Transverse colon (tissue), 4 donors: ENCODE measurements at regions of chr15 and their contacts with region 1.

Region 1: DNA sequence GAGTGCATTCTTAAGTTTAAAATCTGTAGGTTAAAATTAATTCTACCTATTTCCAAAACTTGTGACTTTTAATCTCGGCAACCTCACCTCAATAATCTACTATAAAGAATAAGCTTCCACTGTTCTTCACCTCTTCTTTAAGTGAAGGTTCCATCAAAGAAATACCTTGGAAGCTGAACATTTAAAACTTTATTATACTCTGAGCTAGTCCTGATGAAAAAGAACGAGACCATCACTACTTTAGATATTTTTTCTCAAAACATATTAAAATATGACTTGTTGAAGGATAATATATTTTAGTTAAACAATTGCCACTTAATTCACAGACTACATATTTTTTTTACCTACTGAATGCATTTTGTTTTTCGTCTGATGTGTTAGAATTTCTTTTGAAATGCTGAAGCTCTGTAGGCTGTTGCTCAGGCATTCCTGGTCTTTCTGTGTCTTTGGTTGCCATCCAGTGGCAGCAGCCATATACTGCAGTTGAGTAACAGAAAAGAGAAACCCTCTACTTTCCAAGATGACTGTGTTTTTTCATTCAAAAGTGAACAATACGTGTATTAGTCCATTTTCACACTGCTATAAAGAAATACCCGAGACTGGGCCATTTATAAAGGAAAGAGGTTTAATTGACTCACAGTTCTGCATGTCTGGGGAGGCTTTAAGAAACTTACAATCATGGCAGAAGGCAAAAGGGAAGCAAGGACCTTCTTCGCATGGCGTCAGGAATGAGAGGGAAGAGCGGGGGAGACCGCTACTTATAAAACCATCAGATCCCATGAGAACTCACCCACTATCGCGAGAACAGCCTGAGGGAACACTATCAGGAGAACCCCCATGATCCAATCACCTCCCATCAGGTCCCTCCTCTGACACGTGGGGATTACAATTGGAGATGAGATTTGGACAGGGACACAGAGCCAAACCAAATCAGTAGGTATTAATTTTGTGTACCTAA is 4.5 kb upstream of the GOLGA8B start:
- DNase-seq: peak; percentile 64
- H3K4me3 ChIP-seq: peak overlapping the region in 1 of 4 donors; percentile 12
- H3K27ac ChIP-seq: peak overlapping the region in 1 of 4 donors; percentile 57
- H3K4me1 ChIP-seq: peaks cover 0 to 7% (median 7%) of the 10 kb centered on the region in 4 donors
- H3K27me3 ChIP-seq: peaks cover 18% of the 10 kb centered on the region
- CTCF ChIP-seq: peak; percentile 60 to 77 (median 72)
- EP300 ChIP-seq: no peak
- POLR2A ChIP-seq: no peak

Region 2: DNA sequence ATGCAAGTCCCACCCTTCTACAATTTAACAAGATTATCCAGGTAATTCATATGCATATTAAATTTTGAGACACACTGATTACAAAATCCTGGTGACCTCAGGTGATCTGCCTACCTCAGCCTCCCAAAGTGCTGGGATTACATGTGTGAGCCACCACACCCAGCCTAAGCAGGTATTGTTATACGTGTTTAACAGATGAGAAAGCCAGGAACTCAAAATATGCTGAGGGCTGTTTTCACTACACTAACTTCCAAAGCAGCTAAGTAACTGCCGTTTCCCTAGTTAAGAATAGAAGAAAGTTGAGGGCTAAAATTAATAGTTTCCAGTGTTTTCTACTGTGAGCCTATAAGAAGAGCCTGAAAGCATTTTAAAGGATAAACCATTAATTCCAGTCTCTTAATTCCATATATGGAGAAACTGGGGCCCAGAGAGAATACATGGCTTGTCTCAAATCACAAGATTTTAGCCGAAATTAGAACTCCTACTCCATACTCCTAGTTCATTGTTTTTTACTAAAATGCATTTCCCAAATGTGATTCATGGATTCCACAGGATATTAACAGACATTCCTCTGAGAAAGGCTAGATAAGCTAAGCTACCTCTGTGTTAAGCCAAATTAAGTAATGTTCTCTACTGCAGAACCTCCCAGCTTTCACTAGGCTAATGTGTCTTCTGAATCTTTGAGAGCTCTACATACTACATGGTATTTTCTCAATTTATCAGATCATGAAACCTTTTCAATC is 532.0 kb before region 1 on chr15:
- in situ Hi-C with region 1: loop called in 1 of 4 experiments (anchors 25 kb)
- intact Hi-C with region 1: no loop called
- DNase-seq: no peak
- H3K4me3 ChIP-seq: no peak overlapping the region
- H3K27ac ChIP-seq: no peak overlapping the region
- H3K4me1 ChIP-seq: no peaks in the 10 kb centered on the region
- H3K27me3 ChIP-seq: no peaks in the 10 kb centered on the region
- CTCF ChIP-seq: no peak
- EP300 ChIP-seq: no peak
- POLR2A ChIP-seq: no peak

Region 3: GRCh38 chr15:34084086-34084485 is 503.9 kb before region 1 on chr15:
- in situ Hi-C with region 1: loop called in 1 of 4 experiments (anchors 25 kb)
- intact Hi-C with region 1: no loop called
- DNase-seq: peak; percentile 53
- H3K4me3 ChIP-seq: no peak overlapping the region
- H3K27ac ChIP-seq: peak overlapping the region in 1 of 4 donors; percentile 46
- H3K4me1 ChIP-seq: peaks cover 0 to 17% (median 0%) of the 10 kb centered on the region in 4 donors
- H3K27me3 ChIP-seq: no peaks in the 10 kb centered on the region
- CTCF ChIP-seq: no peak
- EP300 ChIP-seq: no peak
- POLR2A ChIP-seq: no peak

Region 4: DNA sequence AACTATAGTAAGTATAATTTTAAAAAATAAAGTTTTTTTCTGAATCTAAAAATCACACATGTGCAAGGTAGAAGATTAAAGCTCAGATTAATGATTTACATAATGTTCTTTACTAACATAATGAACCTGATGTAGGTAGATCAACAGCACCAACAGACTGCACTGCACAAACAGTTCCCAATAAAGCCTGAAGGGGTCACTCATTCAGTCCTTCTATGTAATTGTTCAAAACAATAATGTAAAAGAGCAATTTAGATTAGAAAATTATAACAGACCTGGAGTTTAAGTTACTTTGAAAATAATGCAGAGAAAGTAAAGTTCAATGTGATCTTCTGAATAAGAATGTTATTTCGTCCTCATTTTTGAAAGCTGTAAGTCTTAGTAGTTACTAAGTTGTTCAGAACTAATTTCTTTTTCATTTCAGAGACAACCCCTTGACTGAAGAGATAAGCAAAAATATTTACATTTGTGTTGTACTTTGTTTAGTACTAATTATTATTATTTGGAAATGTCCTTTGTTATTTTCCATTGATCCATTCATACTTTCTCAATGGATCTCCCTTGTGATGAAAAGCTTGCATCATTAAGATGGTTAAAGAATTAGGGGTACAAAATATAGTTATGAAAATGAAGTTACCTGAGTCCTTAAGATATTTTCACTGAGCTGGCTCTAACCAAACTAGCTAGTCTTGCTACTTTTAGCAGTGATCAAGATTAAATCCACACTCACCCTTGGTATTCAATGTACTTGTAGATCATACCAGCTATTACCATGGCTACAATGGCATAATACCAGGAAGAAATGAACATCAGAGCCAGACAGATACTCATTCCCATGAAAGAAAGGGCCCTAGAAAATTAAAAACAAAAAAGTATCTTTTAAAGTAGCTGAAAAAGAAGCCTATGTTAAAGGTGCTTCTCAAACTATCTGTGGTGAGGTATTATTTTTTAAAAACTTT is 346.3 kb before region 1 on chr15:
- in situ Hi-C with region 1: loop called in 2 of 4 experiments (anchors 25 kb)
- intact Hi-C with region 1: no loop called
- DNase-seq: peak; percentile 18
- H3K4me3 ChIP-seq: no peak overlapping the region
- H3K27ac ChIP-seq: no peak overlapping the region
- H3K4me1 ChIP-seq: no peaks in the 10 kb centered on the region
- H3K27me3 ChIP-seq: no peaks in the 10 kb centered on the region
- CTCF ChIP-seq: peak; percentile 75 to 84 (median 76)
- EP300 ChIP-seq: no peak
- POLR2A ChIP-seq: no peak

Region 5: GRCh38 chr15:34437687-34438086 is 150.3 kb before region 1 on chr15 and contains the start of gene GOLGA8A:
- in situ Hi-C with region 1: loop called in 1 of 4 experiments (anchors 25 kb)
- intact Hi-C with region 1: no loop called
- DNase-seq: peak; percentile 45
- H3K4me3 ChIP-seq: peak within 1 kb of the TSS; percentile 32 to 86 (median 62)
- H3K27ac ChIP-seq: peak within 1 kb of the TSS; percentile 37 to 79 (median 44)
- H3K4me1 ChIP-seq: peaks cover 0 to 17% (median 8%) of the 10 kb centered on the region in 4 donors
- H3K27me3 ChIP-seq: peaks cover 14% of the 10 kb centered on the region
- CTCF ChIP-seq: no peak
- EP300 ChIP-seq: no peak
- POLR2A ChIP-seq: no peak
- total RNA-seq, gene GOLGA8A: 34.8 to 120 (median 47.1) TPM